ENCODE measurements at regions of chr5 and their contacts with region 1.

Region 1: GRCh38 chr5:149834246-149834855 is 104.2 kb downstream of the PPARGC1B start:
- DNase-seq: peak; percentile 60
- H3K4me3 Mint-ChIP-seq: no peak overlapping the region
- H3K27ac Mint-ChIP-seq: no peak overlapping the region
- H3K4me1 Mint-ChIP-seq: peaks cover 5% of the 10 kb centered on the region
- H3K27me3 Mint-ChIP-seq: no peaks in the 10 kb centered on the region

Region 2: DNA sequence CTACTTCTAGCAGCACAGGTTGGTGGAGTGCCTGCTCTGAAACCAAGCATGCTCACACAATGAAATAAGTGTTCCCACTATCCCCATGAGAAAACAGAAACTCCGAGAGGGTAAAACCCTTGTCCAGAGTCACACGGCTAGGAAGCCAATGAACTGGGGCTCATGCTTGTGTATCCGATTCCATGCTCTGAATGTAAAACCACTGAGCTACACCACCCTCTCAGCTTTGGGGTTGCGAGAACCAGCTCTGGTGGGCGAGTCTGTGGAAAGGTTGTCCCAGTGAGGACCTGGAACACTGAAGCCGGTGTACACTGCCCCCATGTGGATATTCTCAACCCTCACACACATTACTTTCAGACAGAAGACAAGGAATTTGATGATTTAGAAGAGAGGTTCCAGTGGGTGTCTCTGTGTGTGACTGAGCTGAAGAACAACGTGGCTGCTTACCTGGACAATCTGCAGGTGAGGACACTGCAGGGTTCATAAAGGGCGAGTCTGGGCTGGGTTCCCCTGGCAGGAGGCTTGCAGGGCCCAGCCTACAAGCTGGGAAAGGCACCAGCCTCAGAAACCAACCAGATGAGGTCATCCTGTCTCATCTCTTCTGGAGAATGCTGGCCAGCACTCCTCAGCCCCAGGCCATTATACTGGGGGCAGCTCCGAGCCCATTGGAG is 215.6 kb before region 1 on chr5:
- CTCF ChIA-PET with region 1: interaction called, 10 read pairs
- POLR2A ChIA-PET with region 1: no interaction called
- intact Hi-C with region 1: no loop called
- DNase-seq: peak; percentile 54
- H3K4me3 Mint-ChIP-seq: no peak overlapping the region
- H3K27ac Mint-ChIP-seq: no peak overlapping the region
- H3K4me1 Mint-ChIP-seq: peaks cover 12% of the 10 kb centered on the region
- H3K27me3 Mint-ChIP-seq: no peaks in the 10 kb centered on the region

Region 3: DNA sequence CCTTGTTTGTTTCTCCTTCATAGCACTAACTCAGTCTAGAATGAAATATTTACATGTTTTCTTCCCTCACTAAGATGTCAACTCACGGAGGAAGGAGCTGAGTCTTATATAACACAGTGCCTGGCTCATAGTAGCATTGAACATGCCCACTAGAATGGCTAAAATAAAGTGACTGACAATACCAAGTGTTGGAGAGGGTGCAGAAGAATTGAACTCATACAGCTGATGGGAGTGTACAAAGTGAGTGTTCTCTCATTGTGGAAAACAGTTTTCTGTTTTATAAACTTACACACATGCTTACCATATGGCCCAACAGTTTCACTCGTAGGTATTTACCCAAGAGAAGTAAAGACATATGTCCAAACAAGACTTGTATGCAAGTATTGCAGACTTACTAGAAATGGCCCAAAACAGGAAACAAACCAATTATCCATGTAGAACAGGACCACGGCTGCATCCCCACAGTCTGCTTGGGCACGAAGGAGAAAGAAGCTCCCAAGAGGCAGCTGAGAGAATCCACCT is 16.8 kb before region 1 on chr5:
- CTCF ChIA-PET with region 1: interaction called, 35 read pairs
- POLR2A ChIA-PET with region 1: no interaction called
- intact Hi-C with region 1: no loop called
- DNase-seq: no peak
- H3K4me3 Mint-ChIP-seq: no peak overlapping the region
- H3K27ac Mint-ChIP-seq: no peak overlapping the region
- H3K4me1 Mint-ChIP-seq: no peaks in the 10 kb centered on the region
- H3K27me3 Mint-ChIP-seq: no peaks in the 10 kb centered on the region

Region 4: GRCh38 chr5:149852641-149853330 is 18.4 kb after region 1 on chr5:
- CTCF ChIA-PET with region 1: interaction called, 76 read pairs
- POLR2A ChIA-PET with region 1: interaction called, 3 read pairs
- intact Hi-C with region 1: no loop called
- DNase-seq: peak; percentile 61
- H3K4me3 Mint-ChIP-seq: no peak overlapping the region
- H3K27ac Mint-ChIP-seq: no peak overlapping the region
- H3K4me1 Mint-ChIP-seq: no peaks in the 10 kb centered on the region
- H3K27me3 Mint-ChIP-seq: no peaks in the 10 kb centered on the region

Region 5: DNA sequence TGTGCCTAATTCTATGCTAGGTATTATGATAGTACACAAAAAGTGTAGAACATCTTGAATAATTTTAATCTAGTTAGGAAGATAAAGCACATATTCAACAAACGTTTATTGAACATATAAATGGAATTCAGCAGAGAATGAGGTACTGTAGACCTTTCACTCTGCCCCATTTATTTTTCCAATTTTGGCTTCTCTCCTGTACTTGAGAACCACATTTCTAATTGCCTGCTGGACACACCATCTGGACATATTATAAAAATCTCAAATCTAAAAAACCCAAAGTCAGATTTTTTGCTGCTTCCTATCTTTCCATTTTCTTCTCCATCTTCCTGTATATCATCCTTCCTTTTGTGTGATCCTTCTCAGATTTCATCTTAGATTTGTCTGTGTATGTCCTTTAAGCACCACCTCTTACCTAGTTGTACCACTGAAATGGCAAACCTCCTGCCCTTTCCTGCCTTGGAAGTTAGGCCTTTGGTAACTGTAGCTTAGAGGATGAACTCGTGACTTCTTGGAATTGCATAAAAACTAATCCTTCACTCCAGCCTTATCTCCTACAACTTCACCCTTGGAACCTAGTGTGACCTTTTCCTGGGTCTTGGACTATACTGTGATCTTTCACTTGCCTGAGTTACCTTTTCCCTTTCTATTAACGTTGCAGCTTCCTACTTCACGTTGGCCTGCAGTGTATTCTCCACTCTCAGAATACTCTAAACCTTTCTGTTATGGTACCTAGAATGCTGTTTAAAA is 135.0 kb after region 1 on chr5:
- CTCF ChIA-PET with region 1: interaction called, 16 read pairs
- POLR2A ChIA-PET with region 1: no interaction called
- intact Hi-C with region 1: no loop called
- DNase-seq: no peak
- H3K4me3 Mint-ChIP-seq: no peak overlapping the region
- H3K27ac Mint-ChIP-seq: no peak overlapping the region
- H3K4me1 Mint-ChIP-seq: no peaks in the 10 kb centered on the region
- H3K27me3 Mint-ChIP-seq: no peaks in the 10 kb centered on the region

Region 6: DNA sequence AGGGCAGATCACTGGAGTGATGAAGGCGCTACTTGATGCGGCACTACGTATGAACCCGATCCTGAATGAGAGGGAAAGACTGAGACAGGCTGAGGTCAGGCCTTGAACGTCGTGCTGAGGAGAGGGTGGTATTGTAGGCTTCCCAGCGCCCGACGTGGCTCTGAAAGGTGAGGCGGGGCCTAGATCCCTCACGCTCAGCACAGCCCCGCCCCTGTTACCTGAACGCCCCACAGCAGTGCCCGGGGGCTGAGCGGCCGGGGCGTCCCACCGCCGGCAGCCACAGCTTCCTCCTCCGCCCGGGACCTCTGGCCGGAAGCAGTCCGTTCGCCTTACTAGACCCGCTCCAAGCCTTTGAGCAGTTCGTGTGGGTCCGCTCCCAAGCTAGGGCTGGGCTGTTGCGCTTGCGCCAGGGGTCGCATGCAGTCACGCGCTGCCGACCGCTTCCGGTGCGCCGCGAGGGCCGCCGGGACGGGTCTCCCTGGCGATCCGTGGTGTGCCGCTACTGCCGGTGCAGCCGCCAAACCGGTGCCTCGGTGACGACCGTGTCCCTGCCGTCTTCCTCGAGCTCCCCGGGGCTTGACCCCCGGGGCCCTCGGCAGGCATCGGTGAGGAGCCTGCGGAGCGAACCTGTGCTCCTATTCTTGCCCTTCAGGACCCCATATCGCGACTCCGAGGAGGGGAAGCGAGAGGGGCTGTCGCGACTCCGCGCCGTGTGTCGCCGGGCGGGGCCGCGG is 166.1 kb after region 1 on chr5 and contains the starts of genes HMGXB3 and TIGD6:
- CTCF ChIA-PET with region 1: interaction called, 269 read pairs
- POLR2A ChIA-PET with region 1: interaction called, 3 read pairs
- intact Hi-C with region 1: no loop called
- DNase-seq: peak; percentile 93
- H3K4me3 Mint-ChIP-seq: peak within 1 kb of the TSS; percentile 86
- H3K27ac Mint-ChIP-seq: peak within 1 kb of the TSS; percentile 93
- H3K4me1 Mint-ChIP-seq: peaks cover 39% of the 10 kb centered on the region
- H3K27me3 Mint-ChIP-seq: no peaks in the 10 kb centered on the region
- total RNA-seq, gene HMGXB3: 29.4 to 31.3 TPM
- total RNA-seq, gene TIGD6: 2.5 to 2.6 TPM

Measured in activated CD4-positive, alpha-beta memory T cell treated with anti-CD3 and anti-CD28 coated beads for 36 hours (primary cell).